Activated CD4-positive, alpha-beta T cell treated with anti-CD3 and anti-CD28 coated beads, Interleukin-2, amount 10 ng/mL, durations not matched to agents 24 days and 14 days (primary cell): ENCODE measurements at regions of chr5 and their contacts with region 1.

Region 1: DNA sequence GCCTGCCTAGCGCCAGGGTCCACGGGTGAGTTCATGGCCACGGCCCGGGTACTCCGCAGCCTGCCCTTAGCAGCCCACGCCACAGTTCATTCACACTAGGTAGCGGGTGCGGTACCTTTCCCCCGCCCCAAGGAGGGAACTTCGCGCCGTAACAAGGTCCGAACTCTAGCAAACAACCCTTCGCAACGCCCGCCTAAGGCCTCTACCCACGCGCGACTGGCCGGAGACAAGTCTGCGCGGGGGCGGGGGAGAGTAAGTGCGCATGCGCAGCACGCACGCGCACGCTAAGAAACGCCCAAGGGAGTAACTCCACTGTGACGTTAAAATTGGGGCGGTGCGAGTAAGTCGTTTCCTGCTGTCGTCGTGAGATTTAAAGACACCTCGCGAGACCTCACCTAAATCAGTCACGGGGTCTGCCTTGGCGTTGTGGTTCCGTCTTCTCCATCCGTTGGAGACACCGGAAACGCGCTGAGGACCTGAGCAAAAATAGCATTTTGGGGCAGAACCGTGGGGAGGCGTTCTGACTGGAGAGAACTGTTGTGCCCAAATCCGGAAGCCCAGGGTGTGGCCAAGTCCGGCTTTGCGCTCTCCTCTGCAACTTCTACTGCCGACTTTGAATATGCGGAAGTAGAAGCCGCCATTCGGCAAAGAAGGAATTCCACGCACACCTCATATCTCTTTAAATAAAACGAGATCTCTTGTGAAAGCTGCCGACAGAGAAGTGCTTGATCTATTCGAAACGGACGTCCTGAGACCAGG is at the start of gene RAPGEF6:
- DNase-seq: peak; percentile 99
- H3K4me3 Mint-ChIP-seq: peak within 1 kb of the TSS; percentile 96
- H3K27ac Mint-ChIP-seq: peak within 1 kb of the TSS; percentile 96
- H3K4me1 Mint-ChIP-seq: peaks cover 25% of the 10 kb centered on the region
- H3K27me3 Mint-ChIP-seq: peaks cover 3% of the 10 kb centered on the region
- total RNA-seq, gene RAPGEF6: 31.8 and 34.9 TPM in 2 replicates

Region 2: GRCh38 chr5:131170540-131171275 is 464.5 kb before region 1 on chr5 and contains the start of gene LYRM7:
- intact Hi-C with region 1: loop called (anchors 2 kb)
- DNase-seq: peak; percentile 99
- H3K4me3 Mint-ChIP-seq: peak within 1 kb of the TSS; percentile 100
- H3K27ac Mint-ChIP-seq: peak within 1 kb of the TSS; percentile 97
- H3K4me1 Mint-ChIP-seq: peaks cover 45% of the 10 kb centered on the region
- H3K27me3 Mint-ChIP-seq: no peaks in the 10 kb centered on the region
- total RNA-seq, gene LYRM7: 17.9 and 18.1 TPM in 2 replicates

Region 3: DNA sequence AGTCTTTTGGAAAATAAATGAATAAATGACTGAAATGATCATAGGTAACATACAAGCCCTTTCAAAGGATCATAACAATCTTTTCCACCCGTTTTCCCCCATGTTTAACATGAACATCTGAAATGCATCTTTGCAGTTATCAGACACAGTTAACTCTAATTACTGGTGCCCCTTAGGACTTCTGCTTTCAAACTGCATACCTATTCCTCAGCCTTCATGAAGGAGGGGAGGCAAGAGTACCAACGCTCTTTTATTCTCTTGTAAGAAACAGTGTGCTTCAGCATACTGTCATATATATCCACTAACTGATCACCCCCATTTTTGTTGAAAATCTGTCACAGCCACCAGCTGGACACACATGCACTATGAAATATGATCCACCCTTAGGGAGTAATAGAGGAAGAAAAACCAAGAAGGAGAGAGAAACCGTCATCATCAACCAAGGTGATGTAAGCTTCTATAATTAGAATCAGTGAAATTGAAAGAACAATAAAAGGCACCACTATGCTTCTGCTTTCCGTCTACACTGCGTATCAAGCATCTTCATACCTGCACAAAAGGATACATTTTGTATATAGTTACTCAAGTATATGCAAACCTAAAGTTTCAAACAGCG is 98.9 kb before region 1 on chr5:
- intact Hi-C with region 1: loop called (anchors 5 kb)
- DNase-seq: peak; percentile 72
- H3K4me3 Mint-ChIP-seq: peak overlapping the region; percentile 65
- H3K27ac Mint-ChIP-seq: peak overlapping the region; percentile 79
- H3K4me1 Mint-ChIP-seq: peaks cover 61% of the 10 kb centered on the region
- H3K27me3 Mint-ChIP-seq: no peaks in the 10 kb centered on the region

Region 4: DNA sequence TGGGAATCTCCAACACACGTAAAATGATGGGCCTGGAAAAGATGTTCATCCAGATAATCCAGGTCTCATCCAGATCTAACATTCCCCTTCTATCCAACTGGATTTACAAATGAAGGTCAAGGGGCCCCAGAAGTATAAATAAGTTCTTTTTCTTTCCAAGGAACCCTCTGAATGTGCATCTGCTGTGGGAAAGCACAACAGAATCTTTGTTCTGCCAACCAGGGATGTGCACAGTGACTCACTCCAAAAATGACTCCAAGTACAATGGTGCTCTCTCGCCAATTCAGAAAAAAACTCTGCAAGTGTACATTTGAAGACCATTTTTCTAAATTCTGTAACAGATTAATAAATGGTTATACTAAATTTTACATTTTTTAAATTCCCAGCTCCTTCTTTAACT is 12.5 kb before region 1 on chr5:
- intact Hi-C with region 1: no loop called
- DNase-seq: peak; percentile 24
- H3K4me3 Mint-ChIP-seq: no peak overlapping the region
- H3K27ac Mint-ChIP-seq: no peak overlapping the region
- H3K4me1 Mint-ChIP-seq: peaks cover 26% of the 10 kb centered on the region
- H3K27me3 Mint-ChIP-seq: no peaks in the 10 kb centered on the region

Region 5: GRCh38 chr5:131661931-131662330 is 26.8 kb after region 1 on chr5:
- intact Hi-C with region 1: no loop called
- DNase-seq: no peak
- H3K4me3 Mint-ChIP-seq: no peak overlapping the region
- H3K27ac Mint-ChIP-seq: no peak overlapping the region
- H3K4me1 Mint-ChIP-seq: peaks cover 2% of the 10 kb centered on the region
- H3K27me3 Mint-ChIP-seq: no peaks in the 10 kb centered on the region

Region 6: GRCh38 chr5:131671994-131672655 is 37.0 kb after region 1 on chr5:
- intact Hi-C with region 1: loop called (anchors 2 kb)
- DNase-seq: no peak
- H3K4me3 Mint-ChIP-seq: no peak overlapping the region
- H3K27ac Mint-ChIP-seq: no peak overlapping the region
- H3K4me1 Mint-ChIP-seq: peaks cover 31% of the 10 kb centered on the region
- H3K27me3 Mint-ChIP-seq: no peaks in the 10 kb centered on the region

Region 7: DNA sequence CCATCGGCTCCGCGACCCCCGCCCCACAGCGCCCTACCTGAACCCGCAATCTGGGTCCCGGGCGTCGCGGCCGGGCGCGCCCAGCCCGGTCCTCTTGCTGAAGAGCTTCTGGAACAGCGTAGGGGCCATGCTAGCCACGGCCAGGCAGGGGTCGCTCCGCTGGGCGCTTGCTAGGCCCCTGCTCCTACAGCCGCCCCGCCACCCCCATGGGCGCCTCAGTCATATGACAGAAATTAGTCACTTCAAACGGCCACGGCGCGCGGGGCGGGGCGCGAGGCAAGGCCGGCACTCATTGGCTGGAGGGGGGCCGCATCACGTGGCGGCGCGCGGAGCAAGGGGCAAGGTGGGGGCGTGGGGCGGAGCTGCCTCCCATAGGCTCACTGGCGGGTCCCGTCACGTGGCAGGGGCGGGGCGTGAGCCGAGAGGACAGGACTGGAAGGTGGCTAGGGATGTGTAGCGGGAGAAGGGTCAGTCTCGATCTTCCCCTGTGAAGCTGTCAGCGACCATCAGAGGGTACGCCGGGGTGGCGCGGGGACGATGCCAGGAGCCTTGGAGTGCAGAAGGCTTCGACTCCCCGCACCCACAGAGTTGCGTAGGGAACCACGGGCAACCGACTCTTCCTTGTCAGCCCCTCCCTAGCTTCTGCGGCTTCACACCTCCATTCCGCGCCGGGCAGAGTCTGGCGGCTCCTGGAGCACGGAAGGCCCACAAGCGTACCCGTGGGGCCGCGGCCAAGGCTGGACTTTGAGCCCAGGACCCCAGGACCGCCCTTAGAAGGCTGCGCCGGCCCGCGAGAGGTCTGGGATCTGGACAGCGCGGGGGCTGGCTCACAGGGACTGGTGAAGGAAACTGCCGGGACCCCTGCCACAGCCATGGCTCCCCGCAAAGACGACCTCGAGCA is 161.9 kb after region 1 on chr5 and contains the start of gene FNIP1:
- intact Hi-C with region 1: loop called (anchors 1 kb)
- DNase-seq: peak; percentile 100
- H3K4me3 Mint-ChIP-seq: peak within 1 kb of the TSS; percentile 99
- H3K27ac Mint-ChIP-seq: peak within 1 kb of the TSS; percentile 95
- H3K4me1 Mint-ChIP-seq: peaks cover 30% of the 10 kb centered on the region
- H3K27me3 Mint-ChIP-seq: peaks cover 8% of the 10 kb centered on the region
- total RNA-seq, gene FNIP1: 15.8 and 17.5 TPM in 2 replicates

Region 8: GRCh38 chr5:132019857-132020555 is 384.8 kb after region 1 on chr5:
- intact Hi-C with region 1: loop called (anchors 2 kb)
- DNase-seq: peak; percentile 95
- H3K4me3 Mint-ChIP-seq: peak overlapping the region; percentile 49
- H3K27ac Mint-ChIP-seq: peak overlapping the region; percentile 87
- H3K4me1 Mint-ChIP-seq: peaks cover 45% of the 10 kb centered on the region
- H3K27me3 Mint-ChIP-seq: peaks cover 41% of the 10 kb centered on the region

Region 9: GRCh38 chr5:133051580-133052332 is 1416.6 kb after region 1 on chr5 and contains the start of gene HSPA4:
- intact Hi-C with region 1: loop called (anchors 10 kb)
- DNase-seq: peak; percentile 99
- H3K4me3 Mint-ChIP-seq: peak within 1 kb of the TSS; percentile 89
- H3K27ac Mint-ChIP-seq: peak within 1 kb of the TSS; percentile 99
- H3K4me1 Mint-ChIP-seq: peaks cover 25% of the 10 kb centered on the region
- H3K27me3 Mint-ChIP-seq: peaks cover 2% of the 10 kb centered on the region
- total RNA-seq, gene HSPA4: 267 and 270 TPM in 2 replicates